BJ (cell line): ENCODE measurements at regions of chr2 and their contacts with region 1.

Region 1: DNA sequence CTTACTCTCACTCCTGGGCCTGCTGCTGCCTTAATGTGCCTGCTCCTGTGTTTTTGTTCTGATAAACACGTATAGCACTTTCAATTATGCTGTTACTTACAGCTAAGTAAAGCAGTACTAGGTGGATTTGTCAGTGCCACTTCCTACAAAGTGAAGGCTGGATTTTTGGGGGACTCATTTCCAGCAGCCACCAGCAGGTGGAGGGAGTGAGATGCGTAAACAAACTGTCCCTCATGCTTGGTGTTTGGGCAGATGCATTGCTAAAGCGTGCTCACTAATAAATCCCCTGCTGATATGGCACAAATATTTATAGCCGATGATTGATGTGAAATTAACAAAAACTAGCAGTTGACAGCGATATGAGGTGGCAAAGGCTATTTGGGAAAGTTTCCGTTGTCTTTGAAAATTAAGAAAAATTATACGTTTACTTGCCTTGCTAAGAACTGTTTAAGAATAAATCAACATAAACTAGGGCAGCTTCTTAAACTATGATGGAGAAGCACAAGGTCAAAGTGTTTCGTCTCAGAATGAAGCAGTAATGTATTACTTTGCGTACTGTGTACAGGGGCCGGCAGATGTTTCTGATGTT is 101.7 kb downstream of the AGAP1 start:
- DNase-seq: peak; percentile 23
- H3K4me3 ChIP-seq: no peak overlapping the region
- H3K27me3 ChIP-seq: no peaks in the 10 kb centered on the region
- CTCF ChIP-seq: peak; percentile 85

Region 2: DNA sequence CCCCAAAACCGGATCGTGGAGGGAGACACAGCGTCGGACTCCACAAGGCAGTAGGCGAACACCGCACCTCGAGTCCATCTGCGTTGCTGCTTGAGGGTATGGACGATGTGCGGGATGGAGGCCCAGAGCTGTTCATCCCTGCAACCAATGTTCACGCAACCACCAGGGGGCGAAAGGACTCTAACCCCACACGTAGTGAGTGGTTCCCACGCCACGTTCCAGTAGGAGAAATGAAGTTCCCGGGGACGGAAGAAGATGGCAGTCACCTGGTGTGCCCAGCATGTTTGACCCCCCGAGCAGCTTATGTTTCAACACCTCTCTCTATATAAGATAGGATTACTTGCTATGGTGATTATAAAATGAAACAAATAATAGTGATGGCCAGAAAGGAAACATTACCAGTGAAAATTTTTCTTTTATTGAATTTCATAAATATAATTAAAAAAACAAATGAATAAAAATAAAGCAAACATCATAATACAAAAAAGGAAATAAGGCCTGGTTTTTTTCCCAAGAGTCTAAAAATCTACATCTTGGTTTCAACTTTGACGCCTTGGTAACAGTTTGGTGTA is 459.4 kb before region 1 on chr2:
- CTCF ChIA-PET with region 1: interaction called, 170 read pairs
- POLR2A ChIA-PET with region 1: no interaction called
- DNase-seq: no peak
- H3K4me3 ChIP-seq: no peak overlapping the region
- H3K27me3 ChIP-seq: 0 out of 2 replicates have a peak, but pooled peaks cover 1% of the 10 kb centered on the region
- CTCF ChIP-seq: peak; percentile 85

Region 3: DNA sequence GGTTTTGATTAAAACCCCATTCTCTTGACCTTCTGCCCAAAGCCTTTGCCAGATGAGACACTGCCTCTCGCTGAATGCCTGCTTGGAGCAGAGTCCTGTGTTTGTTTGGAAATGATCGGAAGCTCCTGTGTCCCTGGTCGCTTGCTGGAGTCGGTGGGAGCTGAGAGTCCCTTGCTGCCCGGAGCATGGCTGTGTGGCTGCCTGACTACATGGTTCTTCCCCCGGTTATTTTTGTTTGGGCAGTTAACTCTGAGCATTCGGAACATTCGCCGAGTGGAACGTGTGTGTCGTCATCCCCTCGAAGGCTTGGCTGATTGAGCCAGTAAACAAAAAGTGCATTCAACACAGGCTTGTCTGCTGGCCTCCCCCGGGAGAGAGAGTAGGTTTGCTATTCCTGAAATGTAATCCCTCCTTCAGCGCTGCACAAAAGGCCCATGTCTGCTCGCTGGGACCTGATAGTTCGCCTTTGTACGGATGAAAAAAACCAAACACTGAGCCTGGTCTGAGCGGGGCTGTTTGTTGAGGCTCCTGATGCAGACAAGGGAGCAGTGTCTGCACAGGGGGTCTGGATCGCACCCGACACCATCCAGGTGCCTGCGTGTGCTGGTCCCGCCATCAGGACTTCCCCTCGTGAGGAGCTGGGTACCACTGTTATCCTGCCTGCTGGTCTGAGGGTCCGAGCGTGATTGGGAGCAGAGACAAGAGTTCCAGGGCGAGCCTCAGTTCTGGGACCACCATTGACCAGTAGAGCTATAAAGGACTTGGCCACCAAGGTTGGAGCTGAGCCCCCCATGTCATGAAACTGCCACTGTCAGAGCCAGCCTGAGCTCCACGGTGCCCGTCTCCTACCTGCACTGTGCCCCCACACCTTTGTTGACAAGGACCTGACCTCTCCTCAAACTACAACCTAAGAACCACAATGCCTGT is 17.8 kb before region 1 on chr2:
- CTCF ChIA-PET with region 1: interaction called, 16 read pairs
- POLR2A ChIA-PET with region 1: no interaction called
- DNase-seq: no peak
- H3K4me3 ChIP-seq: no peak overlapping the region
- H3K27me3 ChIP-seq: no peaks in the 10 kb centered on the region
- CTCF ChIP-seq: no peak

Region 4: GRCh38 chr2:235669269-235669831 is 73.8 kb after region 1 on chr2:
- CTCF ChIA-PET with region 1: interaction called, 120 read pairs
- POLR2A ChIA-PET with region 1: no interaction called
- DNase-seq: no peak
- H3K4me3 ChIP-seq: peak overlapping the region; percentile 41
- H3K27me3 ChIP-seq: no peaks in the 10 kb centered on the region
- CTCF ChIP-seq: no peak

Region 5: GRCh38 chr2:235740821-235741220 is 145.3 kb after region 1 on chr2:
- CTCF ChIA-PET with region 1: interaction called, 146 read pairs
- POLR2A ChIA-PET with region 1: interaction called, 3 read pairs
- DNase-seq: no peak
- H3K4me3 ChIP-seq: no peak overlapping the region
- H3K27me3 ChIP-seq: no peaks in the 10 kb centered on the region
- CTCF ChIP-seq: peak; percentile 31